Dorsolateral prefrontal cortex (tissue), 120 donors: ENCODE measurements at regions of chr2 and their contacts with region 1.

Region 1: DNA sequence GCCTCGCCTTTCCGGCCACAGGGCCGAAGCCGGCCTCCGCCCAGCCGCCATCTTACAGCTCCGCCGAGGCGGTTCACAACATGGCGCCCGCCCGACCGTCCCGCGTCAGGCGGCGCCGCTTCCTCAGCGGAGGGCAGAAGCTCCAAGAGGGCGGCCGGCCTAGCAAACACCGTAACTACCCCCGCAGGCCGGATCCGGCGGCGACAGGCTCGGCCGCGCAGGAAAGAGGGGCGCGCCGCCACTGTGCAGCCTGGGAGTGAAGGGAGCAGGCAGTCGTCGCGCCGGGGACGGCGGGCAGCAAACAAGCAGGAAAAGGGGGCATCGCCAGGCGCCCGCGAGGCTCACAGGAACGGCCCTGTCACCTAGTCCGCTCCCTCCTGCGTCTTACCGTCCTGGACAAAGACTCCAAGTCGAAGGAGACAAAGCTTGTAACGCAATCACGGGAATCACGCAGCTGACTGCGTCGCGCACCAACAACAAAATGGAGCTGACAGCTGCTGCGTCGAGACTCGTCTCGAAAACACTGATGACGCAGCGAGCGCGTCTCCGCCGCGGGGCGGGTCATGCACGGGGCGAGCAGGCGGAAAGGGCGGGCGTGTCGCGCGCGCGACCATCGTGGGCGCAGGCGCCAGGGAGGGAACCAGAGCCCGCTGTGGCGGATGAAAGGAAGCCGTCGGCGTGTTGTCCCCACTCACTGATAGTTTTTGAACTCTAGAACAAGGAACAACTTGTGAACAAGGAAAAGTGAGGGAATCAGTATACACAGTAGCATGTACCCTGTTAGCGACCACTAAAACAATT is at the start of gene CLK1:
- DNase-seq: peak; percentile 93 to 97 (median 95)
- H3K4me3 ChIP-seq: peak within 1 kb of the TSS; percentile 51 to 100 (median 94)
- H3K27ac ChIP-seq: peak within 1 kb of the TSS; percentile 99 to 100 (median 100)
- H3K27me3 ChIP-seq: no peaks in the 10 kb centered on the region
- CTCF ChIP-seq: peak in 12 of 56 donors; percentile 4 to 42 (median 12)
- total RNA-seq, gene CLK1: 115 to 437 (median 174) TPM

Region 2: GRCh38 chr2:200274116-200275075 is 590.0 kb before region 1 on chr2:
- intact Hi-C with region 1: no loop called
- DNase-seq: peak in 2 of 10 donors; percentile 30 to 39
- H3K4me3 ChIP-seq: peak overlapping the region in 1 of 59 donors; percentile 3
- H3K27ac ChIP-seq: peak overlapping the region in 1 of 59 donors; percentile 28
- H3K27me3 ChIP-seq: peaks cover 0 to 4% (median 0%) of the 10 kb centered on the region in 45 donors
- CTCF ChIP-seq: no peak

Region 3: DNA sequence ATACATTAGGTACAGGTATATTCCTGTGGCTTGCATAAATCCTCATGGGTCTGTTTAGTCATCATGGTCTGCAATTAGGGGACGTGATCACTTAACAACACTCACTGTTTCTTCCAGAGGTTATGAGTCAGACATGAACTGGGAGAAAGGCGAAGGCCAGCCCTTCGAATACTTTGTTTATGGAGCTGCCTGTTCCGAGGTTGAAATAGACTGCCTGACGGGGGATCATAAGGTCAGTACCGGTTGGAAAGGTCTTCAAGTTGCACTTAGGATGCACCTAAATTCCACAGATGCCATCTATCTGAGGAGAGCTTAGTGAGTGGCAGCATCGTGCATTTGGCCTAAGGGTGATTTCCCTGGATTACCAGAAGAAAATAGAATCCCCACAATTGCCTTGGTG is 201.6 kb before region 1 on chr2:
- intact Hi-C with region 1: no loop called
- DNase-seq: no peak
- H3K4me3 ChIP-seq: no peak overlapping the region
- H3K27ac ChIP-seq: no peak overlapping the region
- H3K27me3 ChIP-seq: peaks cover 0 to 9% (median 0%) of the 10 kb centered on the region in 45 donors
- CTCF ChIP-seq: no peak

Region 4: GRCh38 chr2:200843993-200844948 is 20.1 kb before region 1 on chr2:
- intact Hi-C with region 1: no loop called
- DNase-seq: no peak
- H3K4me3 ChIP-seq: no peak overlapping the region
- H3K27ac ChIP-seq: no peak overlapping the region
- H3K27me3 ChIP-seq: no peaks in the 10 kb centered on the region
- CTCF ChIP-seq: no peak

Region 5: DNA sequence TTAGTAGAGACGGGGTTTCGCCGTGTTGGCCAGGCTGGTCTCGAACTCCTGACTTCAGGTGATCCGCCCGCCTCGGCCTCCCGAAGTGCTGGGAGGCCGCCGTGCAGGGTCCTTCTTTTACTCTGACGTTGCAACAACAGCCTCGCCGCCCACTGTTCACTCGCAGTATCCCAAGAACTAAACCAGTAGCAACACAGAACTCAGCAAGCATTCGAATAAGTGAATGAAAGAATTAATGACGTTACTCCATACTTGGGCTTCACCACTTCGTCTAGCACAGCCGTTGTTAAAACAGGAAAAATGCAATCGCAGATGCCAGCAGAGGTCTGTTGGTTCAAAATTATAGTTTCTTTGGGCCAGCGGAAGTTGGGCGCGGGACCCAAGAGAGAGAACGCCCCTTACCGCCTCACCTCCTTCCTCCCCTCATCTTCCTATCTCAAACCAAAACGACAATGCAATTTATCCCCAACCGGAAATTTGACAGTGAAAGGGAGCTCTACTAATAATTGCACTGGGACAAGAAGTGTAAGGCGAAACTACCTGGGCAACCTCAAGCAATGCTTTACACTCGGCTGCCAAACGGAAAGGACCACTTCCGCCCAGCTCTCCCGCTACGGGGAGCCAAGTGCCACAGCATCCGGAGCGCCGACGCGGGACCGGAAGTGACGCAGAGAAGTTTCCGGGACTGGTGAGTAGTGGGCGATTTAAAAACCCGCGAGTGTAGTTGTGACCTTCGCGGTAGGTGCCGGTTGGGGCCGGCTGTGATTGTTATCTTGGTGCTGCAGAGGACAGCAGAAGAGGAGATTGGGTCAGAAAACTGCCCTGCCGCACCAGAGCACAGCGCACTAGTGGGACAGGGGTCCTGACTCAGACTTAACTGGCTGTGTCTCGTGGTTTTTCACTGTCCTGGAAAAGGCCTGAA is 24.6 kb after region 1 on chr2 and contains the starts of genes NIF3L1 and PPIL3:
- intact Hi-C with region 1: loop called (anchors 1 to 2 kb)
- DNase-seq: peak; percentile 92 to 97 (median 96)
- H3K4me3 ChIP-seq: peak within 1 kb of the TSS; percentile 61 to 98 (median 88)
- H3K27ac ChIP-seq: peak within 1 kb of the TSS; percentile 72 to 97 (median 91)
- H3K27me3 ChIP-seq: no peaks in the 10 kb centered on the region
- CTCF ChIP-seq: peak in 24 of 56 donors; percentile 7 to 56 (median 23)
- total RNA-seq, gene NIF3L1: 16.7 to 46.3 (median 29.7) TPM
- total RNA-seq, gene PPIL3: 16.4 to 56.9 (median 33.7) TPM